Psoas muscle (tissue), 8 donors: ENCODE measurements at regions of chr10 and their contacts with region 1.

Region 1: DNA sequence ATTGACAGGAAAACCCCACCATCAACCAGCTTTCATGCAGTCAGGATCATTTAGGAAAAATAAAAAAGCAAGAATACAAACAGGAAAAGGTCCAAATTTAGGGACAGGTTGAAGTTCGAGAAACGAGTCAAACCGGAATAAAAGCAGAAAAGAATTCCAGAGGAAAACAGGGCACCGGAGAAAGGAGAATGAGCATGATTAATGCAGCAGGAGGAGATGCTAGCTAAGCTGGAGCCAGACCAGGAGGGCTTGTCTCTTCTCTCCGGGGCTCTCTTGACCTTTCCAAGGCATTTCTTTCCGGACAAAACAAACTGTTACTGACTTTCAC is 26.5 kb upstream of the SVIL start:
- DNase-seq: no peak
- ATAC-seq: no peak
- H3K4me3 ChIP-seq: no peak overlapping the region
- H3K27ac ChIP-seq: peak overlapping the region; percentile 85
- H3K4me1 ChIP-seq: peaks cover 47% of the 10 kb centered on the region
- H3K27me3 ChIP-seq: no peaks in the 10 kb centered on the region
- CTCF ChIP-seq: no peak

Region 2: DNA sequence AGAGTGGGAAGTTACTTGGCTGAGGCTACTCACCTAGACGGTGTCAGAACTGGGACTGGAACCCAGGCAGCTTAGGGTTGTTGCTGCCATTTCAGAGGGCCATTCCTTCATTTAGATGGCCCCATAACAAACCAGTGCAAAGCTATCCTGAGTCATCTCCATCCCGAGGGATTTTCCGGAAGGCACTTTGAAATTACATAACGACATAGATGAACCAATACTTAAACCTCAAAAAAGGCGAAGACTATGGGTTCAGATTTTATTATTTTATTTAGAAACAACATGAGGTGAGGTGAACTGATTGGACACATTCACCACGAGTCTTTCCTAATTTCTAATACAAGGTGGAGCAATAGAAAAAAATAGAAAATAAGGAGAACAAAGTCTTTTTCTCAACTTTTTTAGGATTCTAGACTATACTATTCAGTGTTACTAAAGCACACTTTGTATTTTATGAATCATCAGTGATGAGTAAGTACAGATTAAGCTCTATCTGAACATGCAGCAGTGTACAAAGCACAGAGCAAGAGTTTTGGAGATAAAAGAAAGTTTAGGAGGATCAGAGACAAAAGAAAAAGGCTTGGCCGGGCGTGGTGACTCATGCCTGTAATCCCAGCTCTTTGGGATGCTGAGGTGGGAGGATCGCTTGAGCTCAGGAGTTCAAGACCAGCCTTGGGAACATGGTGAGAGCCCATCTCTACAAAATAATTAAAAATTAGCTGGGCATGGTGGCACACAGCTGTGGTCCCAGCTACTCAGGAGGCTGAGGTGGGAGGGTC is 53.0 kb after region 1 on chr10:
- intact Hi-C with region 1: loop called in 1 of 2 experiments (anchors 5 kb)
- DNase-seq: no peak
- ATAC-seq: peak in 2 of 4 donors; percentile 32 to 47
- H3K4me3 ChIP-seq: no peak overlapping the region
- H3K27ac ChIP-seq: no peak overlapping the region
- H3K4me1 ChIP-seq: peaks cover 50% of the 10 kb centered on the region
- H3K27me3 ChIP-seq: no peaks in the 10 kb centered on the region
- CTCF ChIP-seq: no peak